ENCODE measurements at regions of chr6 and their contacts with region 1.

Region 1: GRCh38 chr6:134436281-134436815 is 118.4 kb upstream of the SGK1 start:
- DNase-seq: peak; percentile 88
- H3K4me3 Mint-ChIP-seq: peak overlapping the region; percentile 44
- H3K27ac Mint-ChIP-seq: peak overlapping the region; percentile 86
- H3K4me1 Mint-ChIP-seq: peaks cover 31% of the 10 kb centered on the region
- H3K27me3 Mint-ChIP-seq: no peaks in the 10 kb centered on the region

Region 2: GRCh38 chr6:134235937-134236751 is 200.2 kb before region 1 on chr6:
- CTCF ChIA-PET with region 1: no interaction called
- intact Hi-C with region 1: loop called (anchors 1 kb)
- DNase-seq: peak; percentile 41
- H3K4me3 Mint-ChIP-seq: peak overlapping the region; percentile 15
- H3K27ac Mint-ChIP-seq: peak overlapping the region; percentile 95
- H3K4me1 Mint-ChIP-seq: peaks cover 57% of the 10 kb centered on the region
- H3K27me3 Mint-ChIP-seq: no peaks in the 10 kb centered on the region

Region 3: GRCh38 chr6:134352786-134353480 is 83.4 kb before region 1 on chr6:
- CTCF ChIA-PET with region 1: no interaction called
- intact Hi-C with region 1: loop called (anchors 2 kb)
- DNase-seq: peak; percentile 53
- H3K4me3 Mint-ChIP-seq: no peak overlapping the region
- H3K27ac Mint-ChIP-seq: no peak overlapping the region
- H3K4me1 Mint-ChIP-seq: peaks cover 29% of the 10 kb centered on the region
- H3K27me3 Mint-ChIP-seq: no peaks in the 10 kb centered on the region

Region 4: DNA sequence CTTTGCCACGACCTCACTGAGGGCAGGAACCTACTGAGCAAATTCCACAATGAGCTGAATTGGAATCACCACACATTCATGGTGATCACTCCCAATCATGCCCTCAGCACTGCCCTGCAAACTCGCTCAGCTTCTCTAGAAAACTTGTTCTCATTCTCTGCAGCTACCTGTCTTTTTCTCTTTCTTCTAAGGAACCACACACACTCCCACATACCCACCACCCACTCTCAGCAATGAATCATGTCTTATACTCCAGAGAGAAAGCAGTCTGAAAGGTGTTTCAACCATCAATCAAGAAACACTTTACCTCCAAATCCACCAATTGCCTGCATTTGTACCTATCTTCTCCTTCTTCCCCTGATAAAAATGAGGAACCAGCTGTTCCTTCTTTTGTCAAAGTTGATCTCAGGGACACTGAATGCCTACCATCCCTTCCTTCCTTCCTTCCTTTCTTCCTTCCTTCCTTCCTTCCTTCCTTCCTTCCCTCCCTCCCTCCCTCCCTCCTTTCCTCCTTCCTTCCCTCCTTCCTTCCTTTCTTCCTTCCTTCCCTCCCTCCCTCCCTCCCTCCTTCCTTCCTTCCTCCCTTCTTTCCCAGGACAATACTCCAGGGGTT is 33.9 kb before region 1 on chr6:
- CTCF ChIA-PET with region 1: no interaction called
- intact Hi-C with region 1: no loop called
- DNase-seq: no peak
- H3K4me3 Mint-ChIP-seq: no peak overlapping the region
- H3K27ac Mint-ChIP-seq: no peak overlapping the region
- H3K4me1 Mint-ChIP-seq: peaks cover 12% of the 10 kb centered on the region
- H3K27me3 Mint-ChIP-seq: no peaks in the 10 kb centered on the region

Region 5: GRCh38 chr6:134424165-134424790 is 12.1 kb before region 1 on chr6:
- CTCF ChIA-PET with region 1: interaction called, 3 read pairs
- intact Hi-C with region 1: loop called (anchors 1 kb)
- DNase-seq: no peak
- H3K4me3 Mint-ChIP-seq: no peak overlapping the region
- H3K27ac Mint-ChIP-seq: no peak overlapping the region
- H3K4me1 Mint-ChIP-seq: peaks cover 25% of the 10 kb centered on the region
- H3K27me3 Mint-ChIP-seq: no peaks in the 10 kb centered on the region

Region 6: DNA sequence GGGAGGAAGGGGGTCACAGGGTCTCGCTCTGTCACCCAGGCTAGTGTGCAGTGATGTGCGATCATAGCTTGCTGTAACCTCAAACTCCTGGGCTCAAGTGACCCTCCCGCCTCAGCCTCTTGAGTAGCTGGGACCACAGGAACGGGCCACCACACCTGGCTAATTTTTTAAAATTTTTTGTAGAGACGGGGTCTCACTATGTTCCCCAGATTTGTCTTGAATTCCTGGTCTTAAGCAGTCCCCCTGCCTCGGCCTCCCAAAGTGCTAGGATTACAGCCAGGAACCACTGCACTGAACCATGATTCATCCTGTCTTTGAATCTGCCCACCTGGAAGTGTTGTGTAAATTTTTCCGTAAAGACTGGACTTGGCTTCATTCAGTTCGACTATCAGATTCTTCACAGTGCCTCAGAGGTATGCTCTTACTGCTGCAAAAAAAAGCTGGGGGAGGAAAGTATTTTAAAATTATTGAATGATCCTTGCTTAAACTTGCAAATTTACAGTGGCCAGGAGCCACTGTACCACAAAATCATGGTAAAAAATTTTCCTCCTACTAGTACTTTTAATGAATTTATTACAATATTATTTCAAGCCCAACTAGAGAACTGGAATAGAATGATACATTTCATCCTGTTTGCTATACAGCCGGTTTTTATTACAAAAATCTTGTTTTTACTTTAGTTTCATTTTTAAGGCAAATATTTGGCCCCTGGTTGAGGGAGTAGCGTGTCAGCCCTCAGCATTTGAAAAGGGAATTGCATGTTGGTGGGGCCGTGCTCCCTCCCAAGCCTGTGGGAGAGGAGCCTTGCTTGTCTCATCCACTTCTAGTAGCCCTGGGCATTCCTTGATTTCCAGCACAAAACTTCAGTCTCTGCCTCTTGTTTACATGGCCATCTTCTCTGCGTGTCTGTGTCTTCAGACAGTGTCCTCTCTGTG is 84.1 kb after region 1 on chr6:
- CTCF ChIA-PET with region 1: no interaction called
- intact Hi-C with region 1: loop called (anchors 1 kb)
- DNase-seq: no peak
- H3K4me3 Mint-ChIP-seq: no peak overlapping the region
- H3K27ac Mint-ChIP-seq: peak overlapping the region; percentile 56
- H3K4me1 Mint-ChIP-seq: peaks cover 57% of the 10 kb centered on the region
- H3K27me3 Mint-ChIP-seq: no peaks in the 10 kb centered on the region

Region 7: GRCh38 chr6:134840086-134840867 is 403.9 kb after region 1 on chr6:
- CTCF ChIA-PET with region 1: no interaction called
- intact Hi-C with region 1: no loop called
- DNase-seq: no peak
- H3K4me3 Mint-ChIP-seq: no peak overlapping the region
- H3K27ac Mint-ChIP-seq: no peak overlapping the region
- H3K4me1 Mint-ChIP-seq: no peaks in the 10 kb centered on the region
- H3K27me3 Mint-ChIP-seq: no peaks in the 10 kb centered on the region

Measured in activated naive CD4-positive, alpha-beta T cell treated with anti-CD3 and anti-CD28 coated beads for 36 hours (primary cell).